Esophagus muscularis mucosa (tissue), 4 donors: ENCODE measurements at regions of chr11 and their contacts with region 1.

Region 1: DNA sequence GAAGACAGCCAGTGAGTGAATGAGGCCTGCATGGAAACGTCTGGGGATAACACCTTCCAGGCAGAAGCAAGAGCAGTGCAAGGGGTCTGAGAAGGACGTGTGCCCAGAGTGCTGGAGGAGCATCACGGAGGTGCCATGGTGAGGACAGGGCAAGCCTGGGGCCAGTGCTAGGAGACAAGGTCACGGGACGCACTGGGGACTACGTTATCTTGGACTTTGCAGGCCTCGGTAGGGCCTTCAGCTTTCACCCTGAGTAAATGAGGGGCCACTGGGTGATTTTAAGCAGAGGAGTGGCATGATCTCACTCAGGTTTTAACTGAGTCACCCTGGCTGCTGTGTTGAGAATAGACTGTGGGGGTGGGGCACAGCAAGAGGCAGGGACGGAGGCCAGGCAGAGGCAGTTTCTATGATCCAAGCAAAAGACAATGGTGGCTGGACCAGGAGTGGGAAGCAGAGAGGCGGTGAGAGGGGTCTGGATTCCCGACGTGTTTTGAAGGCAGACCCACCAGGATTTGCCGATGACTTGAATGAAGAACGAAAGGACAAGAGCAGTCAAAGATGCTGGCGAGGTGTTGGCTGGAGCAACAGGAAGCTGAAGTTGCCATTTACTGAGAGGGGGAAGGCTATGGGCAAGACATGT is 102.7 kb upstream of the PARVA start:
- DNase-seq: no peak
- H3K4me3 ChIP-seq: no peak overlapping the region
- H3K27ac ChIP-seq: no peak overlapping the region
- H3K4me1 ChIP-seq: peaks cover 4 to 27% (median 14%) of the 10 kb centered on the region in 4 donors
- H3K27me3 ChIP-seq: no peaks in the 10 kb centered on the region
- CTCF ChIP-seq: no peak
- EP300 ChIP-seq: no peak
- POLR2A ChIP-seq: no peak

Region 2: DNA sequence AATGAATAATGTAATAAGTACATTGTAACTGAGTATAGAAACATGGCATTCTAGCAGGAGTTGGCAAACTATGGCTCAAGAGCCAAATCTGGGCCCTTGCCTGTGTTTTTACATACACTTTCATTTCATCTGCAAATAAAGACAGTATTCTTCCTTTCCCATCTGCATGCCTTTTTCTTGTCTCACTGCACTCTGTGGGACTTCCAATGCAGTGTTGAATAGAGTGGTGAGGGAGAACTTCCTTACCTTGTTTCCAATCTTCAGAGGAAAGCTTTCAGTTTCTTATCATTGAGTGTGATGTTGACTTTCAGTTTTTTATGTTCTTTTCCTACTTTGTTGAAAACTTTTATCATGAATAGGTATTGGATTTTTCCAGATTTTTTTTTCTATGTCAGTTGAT is 350.9 kb before region 1 on chr11:
- intact Hi-C with region 1: loop called (anchors 10 kb)
- DNase-seq: no peak
- H3K4me3 ChIP-seq: no peak overlapping the region
- H3K27ac ChIP-seq: peak overlapping the region in 1 of 4 donors; percentile 4
- H3K4me1 ChIP-seq: peaks cover 0 to 5% (median 2%) of the 10 kb centered on the region in 4 donors
- H3K27me3 ChIP-seq: no peaks in the 10 kb centered on the region
- CTCF ChIP-seq: no peak
- EP300 ChIP-seq: no peak
- POLR2A ChIP-seq: no peak

Region 3: DNA sequence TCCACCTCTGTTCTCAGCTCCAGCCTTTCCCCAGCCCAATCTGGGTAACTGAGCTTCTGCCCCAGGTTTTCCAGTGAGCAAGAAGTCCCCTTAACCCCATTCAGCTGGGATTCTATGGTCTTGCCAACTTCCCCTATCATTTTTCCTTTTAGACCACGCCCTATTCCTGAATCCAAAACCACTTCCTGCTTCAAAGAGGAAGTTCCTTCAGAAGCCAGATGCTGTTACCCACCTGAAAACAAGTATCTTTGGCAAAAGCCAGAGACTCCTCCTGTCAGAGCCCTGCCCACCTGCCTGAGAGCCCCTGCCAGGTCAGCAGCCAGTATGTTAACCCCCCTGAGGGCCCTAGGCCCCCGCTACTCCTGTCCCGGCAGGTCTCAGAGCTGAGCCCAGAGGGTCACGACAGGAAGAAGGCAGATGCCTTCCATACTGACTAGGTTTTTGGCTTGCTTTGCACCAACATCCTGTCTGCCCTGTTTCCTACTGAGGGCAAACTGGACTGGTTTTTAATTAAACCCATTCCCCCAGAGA is 184.6 kb before region 1 on chr11:
- intact Hi-C with region 1: loop called (anchors 5 kb)
- DNase-seq: no peak
- H3K4me3 ChIP-seq: no peak overlapping the region
- H3K27ac ChIP-seq: peak overlapping the region; percentile 57 to 91 (median 68)
- H3K4me1 ChIP-seq: peaks cover 66 to 76% (median 68%) of the 10 kb centered on the region in 4 donors
- H3K27me3 ChIP-seq: no peaks in the 10 kb centered on the region
- CTCF ChIP-seq: no peak
- EP300 ChIP-seq: no peak
- POLR2A ChIP-seq: no peak